ENCODE measurements at regions of chr22 and their contacts with region 1.

Region 1: GRCh38 chr22:36398621-36399469 is 11.1 kb upstream of the MYH9 start:
- DNase-seq: no peak

Region 2: GRCh38 chr22:36454916-36455570 is 56.2 kb after region 1 on chr22:
- intact Hi-C with region 1: loop called (anchors 5 kb)
- DNase-seq: peak; percentile 68 to 96 (median 90)

Region 3: DNA sequence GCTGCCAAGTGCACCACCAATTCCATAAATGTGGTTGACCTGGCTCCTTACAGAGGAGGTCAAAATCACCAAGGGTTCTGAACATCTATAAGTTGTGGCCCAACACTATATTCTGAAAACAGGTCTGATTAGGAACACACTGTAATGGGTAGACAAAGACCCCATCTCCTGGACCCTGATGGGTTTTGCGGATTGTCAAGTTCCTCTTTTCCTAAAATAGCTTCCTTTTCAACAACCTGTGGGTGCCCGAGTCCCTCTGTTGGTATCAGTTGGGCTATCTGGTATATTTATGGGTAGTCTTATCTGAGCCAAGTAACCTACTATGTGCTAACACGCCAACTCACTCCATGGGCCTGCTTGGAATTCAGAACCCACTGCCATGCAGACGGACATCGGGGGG is 314.6 kb after region 1 on chr22:
- intact Hi-C with region 1: no loop called
- DNase-seq: no peak

Measured in head of caudate nucleus (tissue), 42 donors.